AG04449 (cell line): ENCODE measurements at regions of chr20 and their contacts with region 1.

Region 1: GRCh38 chr20:49484180-49485140 is 2.0 kb upstream of the KCNB1 start:
- DNase-seq: peak; percentile 5
- H3K4me3 ChIP-seq: peak overlapping the region; percentile 55
- CTCF ChIP-seq: peak; percentile 91

Region 2: GRCh38 chr20:49344975-49345374 is 139.5 kb before region 1 on chr20:
- CTCF ChIA-PET with region 1: interaction called, 241 read pairs
- POLR2A ChIA-PET with region 1: no interaction called
- DNase-seq: peak; percentile 71
- H3K4me3 ChIP-seq: peak overlapping the region; percentile 37
- CTCF ChIP-seq: no peak

Region 3: GRCh38 chr20:49384437-49385088 is 99.9 kb before region 1 on chr20:
- CTCF ChIA-PET with region 1: interaction called, 10 read pairs
- POLR2A ChIA-PET with region 1: no interaction called
- DNase-seq: no peak
- H3K4me3 ChIP-seq: no peak overlapping the region
- CTCF ChIP-seq: peak; percentile 60

Region 4: GRCh38 chr20:49508435-49509199 is 24.2 kb after region 1 on chr20:
- CTCF ChIA-PET with region 1: interaction called, 132 read pairs
- POLR2A ChIA-PET with region 1: no interaction called
- DNase-seq: no peak
- H3K4me3 ChIP-seq: no peak overlapping the region
- CTCF ChIP-seq: peak; percentile 55